PC-3 (cell line): ENCODE measurements at regions of chr6 and their contacts with region 1.

Region 1: GRCh38 chr6:2999618-3000557 is at the start of gene NQO2:
- DNase-seq: peak; percentile 89
- ATAC-seq: peak; percentile 78
- H3K4me3 ChIP-seq: peak within 1 kb of the TSS; percentile 80
- H3K27ac ChIP-seq: peak within 1 kb of the TSS; percentile 49
- H3K4me1 ChIP-seq: peaks cover 17% of the 10 kb centered on the region
- H3K27me3 ChIP-seq: no peaks in the 10 kb centered on the region
- CTCF ChIP-seq: no peak
- total RNA-seq, gene NQO2: 21.5 and 26.8 TPM in 2 replicates

Region 2: GRCh38 chr6:2971420-2972218 is 28.3 kb before region 1 on chr6 and contains the start of gene SERPINB6:
- CTCF ChIA-PET with region 1: no interaction called
- POLR2A ChIA-PET with region 1: interaction called, 19 read pairs
- intact Hi-C with region 1: no loop called
- DNase-seq: peak; percentile 56
- ATAC-seq: peak; percentile 75
- H3K4me3 ChIP-seq: peak within 1 kb of the TSS; percentile 87
- H3K27ac ChIP-seq: peak within 1 kb of the TSS; percentile 80
- H3K4me1 ChIP-seq: peaks cover 32% of the 10 kb centered on the region
- H3K27me3 ChIP-seq: no peaks in the 10 kb centered on the region
- CTCF ChIP-seq: no peak; the same call in 1 of the 2 replicates
- total RNA-seq, gene SERPINB6: 119 and 140 TPM in 2 replicates

Region 3: DNA sequence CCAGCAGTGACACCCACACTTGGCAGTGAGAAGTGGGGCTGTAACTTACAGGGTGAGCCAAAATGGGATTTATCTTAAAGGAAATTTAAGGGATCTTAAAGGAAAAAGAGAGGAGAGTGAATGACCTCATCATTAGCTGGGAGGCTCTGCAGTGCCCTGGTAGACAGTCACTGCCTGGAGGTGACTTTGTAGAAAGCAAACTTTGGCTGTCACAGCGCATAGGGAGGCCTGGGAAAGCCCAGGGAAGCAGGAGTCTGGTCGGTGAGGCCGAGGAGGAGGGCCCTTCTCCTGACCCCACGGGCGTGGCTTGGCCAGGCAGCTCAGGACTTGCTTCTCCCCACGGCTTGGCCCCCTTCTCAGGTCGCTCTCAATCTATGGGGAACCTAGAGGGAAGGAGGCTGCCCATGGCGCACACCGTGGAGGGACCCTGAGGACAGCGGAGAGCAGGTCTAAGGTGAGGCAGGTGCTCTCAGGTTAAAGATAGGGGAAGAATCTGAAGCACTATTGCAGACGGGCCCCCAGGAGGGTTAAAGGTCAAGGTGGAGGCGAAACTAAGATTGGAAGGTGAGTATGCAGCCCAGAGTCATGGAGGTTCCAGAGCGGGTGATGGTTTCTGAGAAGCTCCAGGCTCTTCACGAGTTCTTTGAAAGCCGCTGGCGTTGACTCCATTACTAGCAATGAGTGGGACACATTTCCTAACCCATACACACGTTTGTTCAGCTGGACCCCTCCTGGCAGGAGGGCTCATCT is 52.8 kb after region 1 on chr6:
- CTCF ChIA-PET with region 1: interaction called, 5 read pairs
- POLR2A ChIA-PET with region 1: interaction called, 3 read pairs
- intact Hi-C with region 1: loop called (anchors 1 kb)
- DNase-seq: no peak
- ATAC-seq: no peak
- H3K4me3 ChIP-seq: peak overlapping the region; percentile 74
- H3K27ac ChIP-seq: no peak overlapping the region
- H3K4me1 ChIP-seq: peaks cover 9% of the 10 kb centered on the region
- H3K27me3 ChIP-seq: no peaks in the 10 kb centered on the region
- CTCF ChIP-seq: no peak

Region 4: GRCh38 chr6:3068329-3069214 is 68.7 kb after region 1 on chr6 and contains the start of gene RIPK1:
- CTCF ChIA-PET with region 1: no interaction called
- POLR2A ChIA-PET with region 1: interaction called, 29 read pairs
- intact Hi-C with region 1: no loop called
- DNase-seq: peak; percentile 94
- ATAC-seq: peak; percentile 73
- H3K4me3 ChIP-seq: peak within 1 kb of the TSS; percentile 91
- H3K27ac ChIP-seq: peak within 1 kb of the TSS; percentile 88
- H3K4me1 ChIP-seq: peaks cover 16% of the 10 kb centered on the region; the same call in 1 of the 2 replicates
- H3K27me3 ChIP-seq: no peaks in the 10 kb centered on the region
- CTCF ChIP-seq: peak; percentile 43; the same call in 1 of the 2 replicates
- total RNA-seq, gene RIPK1: 14.5 and 17.7 TPM in 2 replicates

Region 5: GRCh38 chr6:4018172-4018905 is 1018.5 kb after region 1 on chr6:
- CTCF ChIA-PET with region 1: no interaction called
- POLR2A ChIA-PET with region 1: interaction called, 13 read pairs
- intact Hi-C with region 1: no loop called
- DNase-seq: peak; percentile 98
- ATAC-seq: peak; percentile 66
- H3K4me3 ChIP-seq: peak overlapping the region; percentile 93
- H3K27ac ChIP-seq: peak overlapping the region; percentile 91
- H3K4me1 ChIP-seq: peaks cover 35% of the 10 kb centered on the region
- H3K27me3 ChIP-seq: no peaks in the 10 kb centered on the region
- CTCF ChIP-seq: peak; percentile 53